Sigmoid colon (tissue), 7 donors: ENCODE measurements at regions of chr7 and their contacts with region 1.

Region 1: GRCh38 chr7:518630-519483 is 789 bp downstream of the PDGFA start:
- DNase-seq: peak; percentile 92
- H3K4me3 ChIP-seq: peak overlapping the region; percentile 68 to 87 (median 69)
- H3K27ac ChIP-seq: peak overlapping the region; percentile 89 to 96 (median 93)
- H3K4me1 ChIP-seq: peaks cover 0 to 72% (median 63%) of the 10 kb centered on the region in 4 donors
- H3K27me3 ChIP-seq: peaks cover 0 to 25% (median 4%) of the 10 kb centered on the region in 3 donors
- CTCF ChIP-seq: no peak
- EP300 ChIP-seq: no peak
- POLR2A ChIP-seq: peak; percentile 61 to 80

Region 2: DNA sequence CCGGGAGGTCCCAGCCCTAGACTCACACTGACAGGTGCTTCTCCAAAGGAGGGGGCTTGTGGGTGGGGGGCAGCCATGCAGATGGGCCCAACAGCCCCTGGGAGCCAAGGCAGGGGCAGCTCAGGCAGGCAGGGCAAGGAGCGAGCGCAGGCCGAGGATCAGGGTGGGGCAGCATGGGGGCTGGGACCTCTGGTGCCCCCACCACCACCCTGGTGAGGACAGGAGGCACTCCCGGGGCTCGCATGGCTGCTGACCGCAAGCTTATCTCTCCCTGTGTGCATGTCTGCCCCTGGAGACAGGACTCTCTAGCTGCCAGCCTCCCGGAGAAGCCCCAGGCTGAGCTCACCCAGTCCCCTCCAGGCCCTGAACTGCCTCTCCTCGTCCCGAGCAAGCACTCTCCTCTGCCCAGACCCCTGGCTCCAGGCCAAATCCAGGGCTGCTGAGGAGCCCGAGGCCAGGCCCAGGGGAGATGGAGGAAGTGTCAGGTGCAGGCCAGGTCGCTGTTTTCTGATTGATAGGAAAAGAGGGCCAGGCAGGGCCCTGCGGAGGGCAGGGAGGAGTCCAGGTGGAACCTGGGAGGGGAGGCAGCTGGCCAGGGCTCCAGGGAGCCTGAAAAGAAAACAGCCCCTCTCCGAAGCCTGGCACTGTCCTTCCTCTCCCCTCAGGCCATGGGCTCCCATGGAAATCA is 38.2 kb before region 1 on chr7:
- intact Hi-C with region 1: no loop called
- DNase-seq: peak; percentile 60
- H3K4me3 ChIP-seq: no peak overlapping the region
- H3K27ac ChIP-seq: no peak overlapping the region
- H3K4me1 ChIP-seq: no peaks in the 10 kb centered on the region
- H3K27me3 ChIP-seq: peaks cover 0 to 5% (median 0%) of the 10 kb centered on the region in 3 donors
- CTCF ChIP-seq: no peak
- EP300 ChIP-seq: no peak
- POLR2A ChIP-seq: no peak

Region 3: DNA sequence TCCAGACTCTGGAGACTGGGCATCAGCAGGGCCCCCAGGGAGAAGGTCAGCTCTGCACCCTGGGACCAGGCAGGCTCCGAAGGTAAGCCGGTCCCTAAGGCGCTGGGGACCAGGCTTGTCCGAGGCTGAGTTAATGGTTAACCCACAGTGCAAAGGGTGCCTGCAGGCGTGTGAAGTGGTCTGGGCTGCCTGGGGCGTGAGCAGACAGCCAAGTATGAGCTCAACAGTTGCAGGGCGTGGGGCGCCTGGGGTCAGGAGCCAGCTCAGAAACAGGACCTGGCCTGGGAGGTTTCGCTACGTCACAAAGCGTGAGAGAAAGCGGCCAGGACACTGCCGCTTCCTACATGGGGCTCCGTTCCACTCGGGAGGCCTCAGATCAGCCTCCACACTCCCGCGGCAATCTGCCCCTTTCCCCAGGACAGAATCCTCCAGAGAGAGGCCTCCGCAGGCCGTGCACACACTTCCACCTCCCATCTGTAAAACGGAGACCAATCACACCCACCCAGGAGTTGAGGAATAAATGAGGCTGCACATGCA is 15.2 kb before region 1 on chr7:
- intact Hi-C with region 1: no loop called
- DNase-seq: peak; percentile 78
- H3K4me3 ChIP-seq: no peak overlapping the region
- H3K27ac ChIP-seq: peak overlapping the region; percentile 11 to 63 (median 52)
- H3K4me1 ChIP-seq: peaks cover 0 to 26% (median 18%) of the 10 kb centered on the region in 4 donors
- H3K27me3 ChIP-seq: no peaks in the 10 kb centered on the region
- CTCF ChIP-seq: no peak
- EP300 ChIP-seq: no peak
- POLR2A ChIP-seq: peak in 1 of 2 donors; percentile 16

Region 4: GRCh38 chr7:668139-668931 is 149.5 kb after region 1 on chr7:
- intact Hi-C with region 1: loop called (anchors 5 kb)
- DNase-seq: peak; percentile 89
- H3K4me3 ChIP-seq: peak overlapping the region in 3 of 4 donors; percentile 16 to 28 (median 24)
- H3K27ac ChIP-seq: peak overlapping the region; percentile 78 to 93 (median 82)
- H3K4me1 ChIP-seq: peaks cover 0 to 55% (median 52%) of the 10 kb centered on the region in 4 donors
- H3K27me3 ChIP-seq: no peaks in the 10 kb centered on the region
- CTCF ChIP-seq: no peak
- EP300 ChIP-seq: peak in 1 of 4 donors; percentile 90
- POLR2A ChIP-seq: no peak

Region 5: GRCh38 chr7:726084-726853 is 207.4 kb after region 1 on chr7 and contains the start of gene DNAAF5:
- intact Hi-C with region 1: loop called (anchors 1 kb)
- DNase-seq: peak; percentile 91
- H3K4me3 ChIP-seq: peak within 1 kb of the TSS; percentile 29 to 98 (median 96)
- H3K27ac ChIP-seq: peak within 1 kb of the TSS; percentile 62 to 84 (median 72)
- H3K4me1 ChIP-seq: peaks cover 0 to 27% (median 19%) of the 10 kb centered on the region in 4 donors
- H3K27me3 ChIP-seq: no peaks in the 10 kb centered on the region
- CTCF ChIP-seq: no peak
- EP300 ChIP-seq: no peak
- POLR2A ChIP-seq: no peak
- total RNA-seq, gene DNAAF5: 13.2 to 25.4 (median 16.0) TPM

Region 6: DNA sequence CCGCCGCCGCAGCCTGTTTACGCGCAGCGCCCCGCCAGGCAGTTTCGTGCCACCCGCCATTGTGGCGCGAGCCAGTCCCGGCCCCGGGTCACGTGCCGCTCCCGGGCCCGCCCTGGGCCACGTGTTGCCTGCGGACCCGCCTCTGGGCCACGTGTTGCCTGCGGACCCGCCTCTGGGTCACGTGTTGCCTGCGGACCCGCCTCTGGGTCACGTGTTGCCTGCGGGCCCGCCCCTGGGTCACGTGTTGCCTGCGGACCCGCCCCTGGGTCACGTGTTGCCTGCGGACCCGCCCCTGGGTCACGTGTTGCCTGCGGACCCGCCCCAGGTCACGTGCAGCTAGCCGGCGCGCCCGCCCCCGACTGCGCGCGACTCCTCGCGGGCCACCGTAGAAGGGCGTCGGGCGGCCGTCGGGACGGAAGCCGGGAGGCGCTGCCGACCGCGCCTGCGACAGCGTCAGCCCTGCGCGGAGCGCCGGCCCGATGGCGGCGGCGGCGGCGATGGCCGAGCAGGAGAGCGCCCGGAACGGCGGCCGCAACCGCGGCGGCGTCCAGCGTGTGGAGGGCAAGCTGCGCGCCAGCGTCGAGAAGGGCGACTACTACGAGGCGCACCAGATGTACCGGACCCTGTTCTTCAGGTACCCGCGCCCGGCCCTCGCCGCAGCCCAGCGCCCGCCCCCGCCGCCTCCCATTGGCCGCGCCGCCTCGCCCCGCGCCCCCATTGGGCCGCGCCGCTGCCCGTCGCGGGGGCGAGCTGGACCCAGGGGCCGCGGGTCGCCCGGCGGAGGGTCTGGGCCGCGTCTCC is 357.5 kb after region 1 on chr7 and contains the start of gene GET4:
- intact Hi-C with region 1: loop called (anchors 10 kb)
- DNase-seq: peak; percentile 99
- H3K4me3 ChIP-seq: peak within 1 kb of the TSS; percentile 85 to 92 (median 88)
- H3K27ac ChIP-seq: peak within 1 kb of the TSS; percentile 89 to 95 (median 90)
- H3K4me1 ChIP-seq: peaks cover 0 to 77% (median 69%) of the 10 kb centered on the region in 4 donors
- H3K27me3 ChIP-seq: no peaks in the 10 kb centered on the region
- CTCF ChIP-seq: peak in 1 of 4 experiments; percentile 7
- EP300 ChIP-seq: no peak
- POLR2A ChIP-seq: peak in 1 of 2 donors; percentile 52
- total RNA-seq, gene GET4: 20.3 to 32.4 (median 25.4) TPM

Region 7: DNA sequence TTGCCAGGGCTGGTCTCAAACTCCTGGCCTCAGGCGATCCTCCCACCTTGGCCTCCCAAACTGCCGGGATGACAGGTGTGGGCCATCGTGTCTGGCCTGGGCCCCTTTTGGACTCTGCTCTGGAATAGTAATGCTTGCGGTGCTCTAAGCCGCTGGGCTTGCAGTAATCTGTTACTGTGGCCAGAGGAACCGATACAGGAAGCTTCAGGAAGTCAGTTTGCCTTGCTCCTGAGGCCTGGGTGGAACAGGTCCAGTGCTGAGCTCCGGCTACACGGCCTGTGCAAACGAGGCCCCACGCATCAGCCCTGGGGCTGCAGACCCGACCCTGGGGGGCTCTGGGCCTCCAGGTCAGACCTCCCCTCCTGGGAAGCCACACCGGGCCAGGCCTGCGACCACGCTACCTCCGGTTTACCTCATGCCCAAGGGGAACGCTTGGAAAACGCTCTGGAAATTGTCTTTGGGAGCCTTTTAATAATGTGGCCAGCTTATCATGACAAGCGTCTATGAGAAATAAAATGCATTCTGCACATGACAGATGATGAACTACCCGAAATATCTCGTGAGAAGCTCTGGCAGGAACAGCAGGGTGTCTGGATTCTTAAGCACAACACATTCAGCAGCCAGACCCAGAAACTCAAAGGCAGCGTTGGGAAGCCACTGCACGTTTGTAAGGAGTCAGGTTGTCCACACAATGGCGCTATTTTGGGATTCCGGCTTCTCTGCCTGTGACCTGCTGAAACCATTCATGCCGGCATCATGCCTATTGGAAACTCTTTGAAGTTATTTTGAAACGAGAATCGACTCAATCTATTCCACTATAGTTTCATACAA is 445.8 kb after region 1 on chr7:
- intact Hi-C with region 1: no loop called
- DNase-seq: peak; percentile 91
- H3K4me3 ChIP-seq: peak overlapping the region in 1 of 4 donors; percentile 12
- H3K27ac ChIP-seq: peak overlapping the region; percentile 78 to 90 (median 86)
- H3K4me1 ChIP-seq: peaks cover 0 to 69% (median 56%) of the 10 kb centered on the region in 4 donors
- H3K27me3 ChIP-seq: no peaks in the 10 kb centered on the region
- CTCF ChIP-seq: peak in 2 of 4 experiments; percentile 18 to 23
- EP300 ChIP-seq: peak in 1 of 4 donors; percentile 85
- POLR2A ChIP-seq: no peak